Caco-2 (cell line): ENCODE measurements at regions of chr15 and their contacts with region 1.

Region 1: GRCh38 chr15:50718700-50719125 is 32.1 kb upstream of the TRPM7 start:
- DNase-seq: peak; percentile 56 to 59
- H3K4me3 ChIP-seq: no peak overlapping the region
- H3K4me3 Mint-ChIP-seq: peak overlapping the region; percentile 42
- H3K27ac Mint-ChIP-seq: peak overlapping the region; percentile 82
- H3K4me1 ChIP-seq: peaks cover 13% of the 10 kb centered on the region
- H3K4me1 Mint-ChIP-seq: peaks cover 19% of the 10 kb centered on the region
- H3K27me3 ChIP-seq: no peaks in the 10 kb centered on the region
- H3K27me3 Mint-ChIP-seq: no peaks in the 10 kb centered on the region
- CTCF ChIP-seq: no peak

Region 2: DNA sequence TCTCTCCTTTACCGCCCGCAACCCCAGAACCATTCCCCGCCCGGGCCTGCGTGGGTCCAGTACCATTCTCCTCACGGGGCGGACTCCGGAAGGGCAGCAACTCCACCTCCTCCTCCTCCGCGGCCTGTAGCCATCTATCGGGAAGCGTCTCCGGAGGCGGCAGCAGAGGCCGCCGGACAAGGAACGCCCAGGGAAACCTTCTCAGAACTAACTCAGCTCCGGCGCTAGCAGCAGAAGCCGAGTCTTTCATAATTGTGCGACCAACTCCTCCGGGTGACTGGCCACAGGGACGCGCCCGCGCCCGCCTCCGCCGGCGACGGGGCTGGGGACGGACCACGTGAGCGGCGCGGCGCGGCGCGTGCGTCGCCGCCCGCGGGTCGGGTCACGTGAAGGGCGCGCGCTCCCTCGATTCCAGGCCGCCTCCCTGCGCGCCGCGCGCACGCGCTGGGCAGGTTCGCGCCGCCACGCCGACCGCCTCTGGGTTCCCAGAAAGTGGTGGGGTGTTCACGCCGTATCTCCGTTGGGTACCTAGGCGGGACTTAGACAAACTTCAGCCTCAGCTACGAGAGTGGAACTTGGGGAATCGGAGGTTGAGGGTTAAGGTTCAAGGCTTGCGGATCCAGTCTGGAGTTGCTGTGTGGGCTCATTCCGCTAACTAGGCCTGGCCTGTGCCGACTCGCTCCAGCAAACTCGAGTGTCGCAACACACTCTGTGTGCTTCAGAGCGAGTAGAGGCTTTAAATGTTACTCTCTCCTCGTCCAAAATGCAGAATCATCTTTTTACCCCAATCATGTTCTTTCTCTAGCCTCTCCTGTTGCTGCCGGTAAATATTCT is 32.0 kb before region 1 on chr15 and contains the start of gene TRPM7:
- CTCF ChIA-PET with region 1: interaction called, 3 read pairs
- POLR2A ChIA-PET with region 1: no interaction called
- intact Hi-C with region 1: loop called (anchors 1 kb)
- DNase-seq: peak; percentile 83 to 91
- H3K4me3 ChIP-seq: peak within 1 kb of the TSS; percentile 87
- H3K4me3 Mint-ChIP-seq: peak within 1 kb of the TSS; percentile 85
- H3K27ac Mint-ChIP-seq: peak within 1 kb of the TSS; percentile 98
- H3K4me1 ChIP-seq: peaks cover under 1% of the 10 kb centered on the region; the same call in 1 of the 2 replicates
- H3K4me1 Mint-ChIP-seq: peaks cover 13% of the 10 kb centered on the region
- H3K27me3 ChIP-seq: no peaks in the 10 kb centered on the region
- H3K27me3 Mint-ChIP-seq: no peaks in the 10 kb centered on the region
- CTCF ChIP-seq: peak in 1 of 2 experiments; percentile 5
- total RNA-seq, gene TRPM7: 70.9 and 73.4 TPM in 2 replicates

Region 3: GRCh38 chr15:50840520-50840919 is 121.8 kb after region 1 on chr15:
- CTCF ChIA-PET with region 1: no interaction called
- POLR2A ChIA-PET with region 1: no interaction called
- intact Hi-C with region 1: no loop called
- DNase-seq: no peak
- H3K4me3 ChIP-seq: no peak overlapping the region
- H3K4me3 Mint-ChIP-seq: no peak overlapping the region
- H3K27ac Mint-ChIP-seq: no peak overlapping the region
- H3K4me1 ChIP-seq: no peaks in the 10 kb centered on the region
- H3K4me1 Mint-ChIP-seq: no peaks in the 10 kb centered on the region
- H3K27me3 ChIP-seq: no peaks in the 10 kb centered on the region
- H3K27me3 Mint-ChIP-seq: no peaks in the 10 kb centered on the region
- CTCF ChIP-seq: no peak